Right cardiac atrium (tissue), 5 donors: ENCODE measurements at regions of chr13 and their contacts with region 1.

Region 1: DNA sequence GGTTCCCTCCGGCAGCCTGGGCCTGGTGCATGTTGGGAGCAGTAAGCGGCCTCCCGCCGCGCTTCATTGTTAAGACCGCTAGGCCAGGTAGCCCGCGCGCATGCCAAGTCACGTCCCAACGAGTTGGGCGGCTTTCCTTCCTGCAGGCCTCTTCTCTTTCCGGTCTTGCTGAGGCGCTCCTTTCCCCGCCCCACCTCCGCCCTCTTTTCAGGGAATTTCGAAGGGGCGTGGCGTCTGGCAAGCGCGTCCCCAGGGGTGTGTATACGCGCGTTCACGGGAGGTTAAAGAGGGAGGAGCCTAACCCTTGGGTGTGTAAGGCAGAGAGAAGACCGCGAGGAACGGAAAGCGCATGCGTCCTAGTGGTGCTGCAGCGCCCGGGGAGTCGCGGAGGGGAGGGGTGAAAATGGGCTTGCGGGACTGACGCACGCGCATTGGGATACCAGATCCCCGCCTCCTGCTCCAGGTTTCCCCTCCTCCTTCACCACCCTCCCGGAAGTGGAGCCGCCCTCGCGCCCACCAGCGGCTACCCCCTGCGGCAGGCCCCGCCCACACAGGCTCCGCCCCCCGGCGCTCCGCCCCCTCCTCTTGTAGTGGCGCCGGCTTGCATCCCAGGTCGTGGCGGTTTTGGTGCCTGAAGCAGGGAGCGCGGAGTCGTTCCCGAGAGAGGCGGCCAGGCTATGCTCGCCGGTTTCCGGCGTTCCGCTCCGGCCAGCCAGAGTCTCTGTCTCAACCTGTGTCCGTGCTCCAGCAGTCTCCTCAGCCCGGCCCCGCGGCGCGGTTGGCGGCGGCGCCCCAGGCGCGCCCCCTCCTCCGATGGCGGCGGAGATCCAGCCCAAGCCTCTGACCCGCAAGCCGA is at the start of gene WDFY2:
- DNase-seq: peak; percentile 99 to 100 (median 100)
- ATAC-seq: peak; percentile 97
- H3K4me3 ChIP-seq: peak within 1 kb of the TSS; percentile 56
- H3K27ac ChIP-seq: peak within 1 kb of the TSS; percentile 91
- H3K4me1 ChIP-seq: no peaks in the 10 kb centered on the region
- H3K27me3 ChIP-seq: no peaks in the 10 kb centered on the region
- total RNA-seq, gene WDFY2: 4.9 to 7.9 (median 6.4) TPM

Region 2: GRCh38 chr13:51697181-51697580 is 113.1 kb after region 1 on chr13:
- intact Hi-C with region 1: no loop called
- DNase-seq: no peak
- ATAC-seq: no peak
- H3K4me3 ChIP-seq: no peak overlapping the region
- H3K27ac ChIP-seq: no peak overlapping the region
- H3K4me1 ChIP-seq: no peaks in the 10 kb centered on the region
- H3K27me3 ChIP-seq: no peaks in the 10 kb centered on the region

Region 3: GRCh38 chr13:51729866-51730546 is 145.9 kb after region 1 on chr13:
- intact Hi-C with region 1: loop called in 1 of 4 experiments (anchors 10 kb)
- DNase-seq: peak; percentile 60 to 77 (median 63)
- ATAC-seq: peak; percentile 77 to 79
- H3K4me3 ChIP-seq: no peak overlapping the region
- H3K27ac ChIP-seq: peak overlapping the region; percentile 68
- H3K4me1 ChIP-seq: peaks cover 10% of the 10 kb centered on the region
- H3K27me3 ChIP-seq: no peaks in the 10 kb centered on the region

Region 4: GRCh38 chr13:51803422-51804294 is 219.6 kb after region 1 on chr13 and contains the start of gene DHRS12:
- intact Hi-C with region 1: loop called in 2 of 4 experiments (anchors 5 to 10 kb)
- DNase-seq: peak; percentile 93 to 98 (median 97)
- ATAC-seq: peak; percentile 90 to 92
- H3K4me3 ChIP-seq: peak within 1 kb of the TSS; percentile 60
- H3K27ac ChIP-seq: peak within 1 kb of the TSS; percentile 92
- H3K4me1 ChIP-seq: peaks cover 17% of the 10 kb centered on the region
- H3K27me3 ChIP-seq: no peaks in the 10 kb centered on the region
- total RNA-seq, gene DHRS12: 11.1 to 13.6 (median 12.2) TPM